MCF 10A (cell line): ENCODE measurements at regions of chr18 and their contacts with region 1.

Region 1: DNA sequence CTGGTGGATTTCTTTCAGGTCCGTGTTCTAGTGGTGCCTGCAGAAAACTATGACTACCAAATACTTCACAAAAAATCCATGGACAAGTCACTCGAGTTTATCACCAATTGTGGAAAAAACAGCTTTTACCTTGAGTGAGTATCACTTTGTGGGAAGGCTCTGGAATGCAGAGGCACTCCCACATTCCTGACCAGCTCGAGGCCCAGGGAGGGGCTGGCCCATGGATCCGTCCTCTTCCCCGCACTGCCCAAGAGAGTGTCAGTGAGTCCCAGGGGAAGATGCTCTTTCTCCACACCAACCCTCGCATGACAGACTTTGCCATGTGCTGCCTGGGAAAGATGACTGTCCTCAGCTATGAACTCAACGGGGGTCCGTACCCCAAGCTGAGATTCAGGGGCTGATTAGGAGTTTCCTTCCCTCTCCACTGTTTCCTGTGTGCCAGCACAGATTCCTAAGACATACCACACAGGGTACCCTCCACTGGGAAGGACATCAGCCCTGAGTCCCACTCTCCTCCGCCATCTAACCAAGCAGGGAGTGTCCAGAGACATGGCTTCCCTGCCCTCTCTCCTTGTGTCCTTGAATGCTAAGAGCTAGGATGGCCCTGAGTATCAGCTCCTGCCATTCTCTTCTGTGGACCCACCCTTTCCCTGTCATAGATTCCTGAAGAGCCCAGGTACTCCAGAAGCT is 155.9 kb downstream of the LAMA3 start:
- DNase-seq: peak; percentile 49
- H3K4me3 Mint-ChIP-seq: peak overlapping the region; percentile 29
- H3K27ac Mint-ChIP-seq: peak overlapping the region; percentile 92
- H3K4me1 Mint-ChIP-seq: peaks cover 26% of the 10 kb centered on the region
- H3K27me3 Mint-ChIP-seq: no peaks in the 10 kb centered on the region
- CTCF ChIP-seq: no peak

Region 2: DNA sequence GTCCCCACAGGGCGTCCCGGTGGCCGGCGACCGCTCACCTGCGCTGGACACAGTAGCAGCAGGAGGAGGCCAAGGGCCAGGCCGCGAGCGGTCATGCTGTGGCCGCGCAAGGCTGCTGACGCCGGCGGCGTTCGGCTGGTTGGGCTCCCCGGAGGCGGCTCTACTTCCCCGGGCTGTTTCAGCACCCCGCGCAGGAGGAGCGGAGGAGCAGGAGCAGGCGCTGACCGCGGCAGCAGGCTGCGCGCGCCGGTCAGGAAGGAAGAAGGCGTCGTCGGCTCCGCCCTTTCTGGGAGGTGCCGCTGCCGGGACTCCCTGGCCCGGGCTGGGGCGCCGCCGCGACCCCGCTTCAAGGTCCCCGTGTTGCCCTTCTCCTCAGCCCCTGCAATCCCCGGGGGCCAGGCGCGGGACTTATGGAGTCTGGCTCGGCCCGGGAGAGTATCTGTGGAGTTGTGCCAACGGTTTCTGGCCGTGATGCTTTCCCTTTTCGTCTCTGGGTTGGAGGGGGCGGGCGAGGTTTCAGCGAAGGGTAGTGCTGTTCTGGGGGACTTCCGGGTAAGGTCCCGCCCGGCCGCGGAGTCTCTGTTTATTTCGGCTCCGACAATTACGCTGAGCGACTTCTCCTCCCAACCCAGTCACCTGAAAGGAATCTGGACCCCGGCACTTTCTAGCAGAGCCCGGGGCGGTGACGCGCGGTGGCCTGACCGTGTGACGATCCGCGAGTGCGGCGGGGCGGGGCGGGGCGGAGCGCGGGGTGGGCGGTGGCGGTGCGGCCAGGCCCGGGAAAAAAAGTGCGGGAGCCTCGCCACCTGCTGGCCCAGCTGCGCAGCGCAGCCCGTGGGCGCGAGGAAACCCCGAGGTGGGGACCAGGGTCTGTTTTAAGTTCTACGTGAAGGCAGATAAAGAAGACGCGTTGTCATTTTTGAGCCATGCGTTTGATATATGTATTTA is 258.6 kb before region 1 on chr18 and contains the start of gene NPC1:
- CTCF ChIA-PET with region 1: no interaction called
- POLR2A ChIA-PET with region 1: no interaction called
- intact Hi-C with region 1: no loop called
- DNase-seq: peak; percentile 93
- H3K4me3 Mint-ChIP-seq: peak within 1 kb of the TSS; percentile 84
- H3K27ac Mint-ChIP-seq: peak within 1 kb of the TSS; percentile 98
- H3K4me1 Mint-ChIP-seq: peaks cover 13% of the 10 kb centered on the region
- H3K27me3 Mint-ChIP-seq: no peaks in the 10 kb centered on the region
- CTCF ChIP-seq: peak; percentile 90
- total RNA-seq, gene NPC1: 60.4 and 78.8 TPM in 2 replicates

Region 3: DNA sequence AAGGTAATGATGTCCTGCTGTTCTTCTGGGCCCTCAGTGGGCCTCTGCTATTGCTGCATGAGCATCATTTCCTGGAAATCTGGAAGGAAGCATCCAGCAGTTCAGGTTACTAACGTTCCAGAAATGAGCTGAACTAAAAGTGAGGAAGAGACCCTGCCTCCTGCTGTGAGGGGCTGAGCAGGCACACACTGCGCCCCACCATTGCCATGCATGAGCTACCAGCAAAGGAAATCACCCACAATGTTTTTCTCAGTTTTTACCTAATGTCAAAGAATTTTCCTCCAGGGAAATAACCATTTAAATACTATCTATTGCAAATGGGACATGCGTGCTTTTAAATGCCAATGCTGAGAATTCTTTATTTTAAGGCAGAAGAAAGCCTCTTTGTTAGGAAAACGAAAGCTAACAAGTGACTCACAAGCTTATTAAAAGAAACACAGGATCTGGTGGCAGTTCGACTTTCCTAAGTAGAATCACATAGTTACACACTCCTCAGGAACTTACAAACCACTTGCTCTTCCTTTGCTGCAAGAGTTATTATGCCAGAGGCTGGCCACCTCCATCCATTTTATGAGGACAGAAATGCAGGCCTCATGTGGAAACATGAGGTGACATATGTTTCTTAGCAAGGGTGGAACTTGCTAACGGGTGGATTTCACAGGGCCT is 16.8 kb after region 1 on chr18:
- CTCF ChIA-PET with region 1: no interaction called
- POLR2A ChIA-PET with region 1: interaction called, 10 read pairs
- intact Hi-C with region 1: no loop called
- DNase-seq: no peak
- H3K4me3 Mint-ChIP-seq: no peak overlapping the region
- H3K27ac Mint-ChIP-seq: no peak overlapping the region
- H3K4me1 Mint-ChIP-seq: peaks cover 24% of the 10 kb centered on the region
- H3K27me3 Mint-ChIP-seq: no peaks in the 10 kb centered on the region
- CTCF ChIP-seq: no peak